ENCODE measurements at regions of chr16 and their contacts with region 1.

Region 1: DNA sequence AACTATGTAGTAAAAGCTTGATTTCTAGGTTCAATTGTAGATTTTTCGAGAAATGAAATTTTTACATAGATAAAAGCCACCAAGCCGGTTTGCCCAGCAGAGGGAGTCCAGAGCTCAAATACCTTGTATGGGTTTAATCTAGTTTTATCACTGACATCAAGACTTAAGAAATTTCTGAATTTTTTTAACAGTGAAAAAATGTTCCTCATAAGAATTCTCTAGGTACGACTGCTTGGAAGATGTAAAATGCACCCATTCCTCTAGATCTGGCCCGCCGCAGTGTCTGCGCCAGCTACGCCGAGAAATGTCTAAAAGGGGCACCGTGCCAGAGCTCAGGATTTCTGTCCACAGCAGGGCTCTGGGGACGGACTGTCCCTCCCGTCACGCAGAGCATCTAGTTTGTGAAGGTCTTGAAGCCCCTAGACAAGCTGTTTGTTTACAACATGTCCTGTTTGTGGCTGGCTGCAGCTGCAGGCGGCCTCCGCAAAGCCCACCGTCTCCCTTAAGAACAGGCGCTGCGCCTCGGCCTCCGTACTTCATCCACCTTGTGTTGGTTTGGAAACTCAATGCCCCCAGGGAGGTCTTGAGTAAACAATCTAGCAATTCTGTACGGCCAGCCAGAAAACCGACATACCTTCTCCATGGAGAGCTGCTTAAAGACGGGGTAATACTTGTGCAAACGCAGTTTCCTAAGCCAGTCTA is 24.8 kb downstream of the MAP1LC3B start:
- DNase-seq: peak; percentile 15 to 54
- ATAC-seq: peak in 1 of 2 experiments; percentile 62; a peak in 3 of 6 replicates
- H3K4me3 ChIP-seq: no peak overlapping the region
- H3K27ac ChIP-seq: no peak overlapping the region
- H3K4me1 ChIP-seq: no peaks in the 10 kb centered on the region
- CTCF ChIP-seq: peak; percentile 74
- EP300 ChIP-seq: no peak
- POLR2A ChIP-seq: no peak
- RAD21 ChIP-seq: peak; percentile 69 to 72

Region 2: DNA sequence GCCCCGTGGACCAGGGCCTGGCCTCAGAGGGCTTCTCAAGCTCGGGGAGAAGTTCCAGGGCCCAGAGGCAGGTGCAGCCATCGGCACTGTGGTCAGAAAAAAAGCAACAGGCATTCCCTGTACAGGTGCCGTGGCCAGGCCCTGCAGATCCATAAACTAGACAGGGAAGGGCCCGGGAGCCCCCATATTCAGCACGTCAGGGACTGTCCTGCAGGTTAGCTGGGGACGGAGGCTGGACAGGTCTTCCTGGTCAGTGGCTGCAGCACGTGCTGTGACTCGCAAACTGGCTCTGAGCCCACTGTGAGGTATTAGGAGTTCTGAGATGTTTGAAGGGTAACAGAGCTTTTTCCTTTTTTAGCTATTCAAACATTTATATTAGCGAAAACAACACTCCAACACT is 84.8 kb before region 1 on chr16:
- CTCF ChIA-PET with region 1: no interaction called
- POLR2A ChIA-PET with region 1: no interaction called
- DNase-seq: no peak
- ATAC-seq: no peak
- H3K4me3 ChIP-seq: no peak overlapping the region
- H3K27ac ChIP-seq: no peak overlapping the region
- H3K4me1 ChIP-seq: no peaks in the 10 kb centered on the region
- CTCF ChIP-seq: no peak
- EP300 ChIP-seq: no peak
- POLR2A ChIP-seq: no peak
- RAD21 ChIP-seq: no peak

Region 3: DNA sequence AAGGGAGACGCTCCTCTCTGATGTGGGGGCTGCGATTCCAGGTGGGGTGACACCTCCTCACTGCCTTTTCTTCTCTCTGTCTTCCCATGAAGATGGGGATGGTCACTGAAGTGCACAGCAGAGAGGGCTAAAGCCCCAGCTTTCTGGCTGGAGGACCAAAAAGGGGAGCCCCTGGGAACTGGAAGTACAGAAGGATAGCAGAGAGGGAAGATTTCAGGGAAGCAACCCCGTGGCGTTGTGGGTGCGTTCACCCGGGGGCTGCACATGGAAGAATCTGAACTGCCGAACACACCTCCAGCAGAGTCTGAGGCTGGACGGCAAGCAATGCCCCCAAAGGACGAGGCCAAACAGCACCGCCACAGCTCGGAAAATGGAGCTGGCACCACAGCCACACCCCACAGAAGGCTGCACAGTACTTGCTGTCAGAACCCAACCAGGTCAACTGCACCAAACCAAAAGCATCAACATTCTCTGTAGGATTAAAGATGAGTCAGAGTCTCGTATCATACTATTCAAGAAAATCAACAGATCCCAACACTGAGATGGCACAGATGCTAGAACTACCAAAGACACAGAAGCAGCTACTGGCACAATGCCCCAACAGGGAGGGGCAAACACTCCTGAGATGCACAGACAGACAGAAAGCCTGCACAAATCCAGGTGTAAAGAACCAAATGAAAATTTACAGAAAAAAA is 25.1 kb after region 1 on chr16:
- CTCF ChIA-PET with region 1: interaction called, 12 read pairs
- POLR2A ChIA-PET with region 1: no interaction called
- DNase-seq: no peak
- ATAC-seq: no peak
- H3K4me3 ChIP-seq: no peak overlapping the region
- H3K27ac ChIP-seq: no peak overlapping the region
- H3K4me1 ChIP-seq: no peaks in the 10 kb centered on the region
- CTCF ChIP-seq: no peak
- EP300 ChIP-seq: no peak
- POLR2A ChIP-seq: no peak
- RAD21 ChIP-seq: no peak

Region 4: GRCh38 chr16:87451563-87452210 is 34.7 kb after region 1 on chr16:
- CTCF ChIA-PET with region 1: interaction called, 16 read pairs
- POLR2A ChIA-PET with region 1: no interaction called
- DNase-seq: no peak
- ATAC-seq: no peak
- H3K4me3 ChIP-seq: no peak overlapping the region
- H3K27ac ChIP-seq: no peak overlapping the region
- H3K4me1 ChIP-seq: no peaks in the 10 kb centered on the region; the same call in 2 of the 3 replicates
- CTCF ChIP-seq: no peak
- EP300 ChIP-seq: no peak
- POLR2A ChIP-seq: no peak
- RAD21 ChIP-seq: no peak

Region 5: GRCh38 chr16:87461466-87461991 is 44.6 kb after region 1 on chr16:
- CTCF ChIA-PET with region 1: interaction called, 16 read pairs
- POLR2A ChIA-PET with region 1: no interaction called
- DNase-seq: peak; percentile 94
- ATAC-seq: peak; percentile 98 to 99
- H3K4me3 ChIP-seq: peak overlapping the region; percentile 40
- H3K27ac ChIP-seq: peak overlapping the region; percentile 72 to 86
- H3K4me1 ChIP-seq: peaks cover 40% of the 10 kb centered on the region
- CTCF ChIP-seq: peak; percentile 67
- EP300 ChIP-seq: no peak
- POLR2A ChIP-seq: 0 out of 2 replicates have a peak, but pooled peaks have one; percentile 11
- RAD21 ChIP-seq: peak; percentile 39 to 42; a peak in 3 of 5 replicates

Region 6: GRCh38 chr16:87581833-87582203 is 164.8 kb after region 1 on chr16:
- CTCF ChIA-PET with region 1: interaction called, 11 read pairs
- POLR2A ChIA-PET with region 1: no interaction called
- DNase-seq: peak; percentile 90 to 95
- ATAC-seq: peak; percentile 92
- H3K4me3 ChIP-seq: peak overlapping the region; percentile 8; the same call in 2 of the 3 replicates
- H3K27ac ChIP-seq: peak overlapping the region; percentile 84 to 89
- H3K4me1 ChIP-seq: peaks cover 38% of the 10 kb centered on the region
- CTCF ChIP-seq: no peak
- EP300 ChIP-seq: peak in 1 of 2 experiments; percentile 47; a peak in 2 of 5 replicates
- POLR2A ChIP-seq: no peak
- RAD21 ChIP-seq: no peak

Region 7: GRCh38 chr16:88118376-88118775 is 701.4 kb after region 1 on chr16:
- CTCF ChIA-PET with region 1: no interaction called
- POLR2A ChIA-PET with region 1: no interaction called
- DNase-seq: no peak
- ATAC-seq: peak; percentile 17 to 48
- H3K4me3 ChIP-seq: no peak overlapping the region
- H3K27ac ChIP-seq: peak overlapping the region; percentile 56 to 85
- H3K4me1 ChIP-seq: peaks cover 18% of the 10 kb centered on the region
- CTCF ChIP-seq: no peak
- EP300 ChIP-seq: no peak
- POLR2A ChIP-seq: no peak
- RAD21 ChIP-seq: no peak

Measured in A549 (cell line).